Aorta (tissue), 5 donors: ENCODE measurements at regions of chr1 and their contacts with region 1.

Region 1: DNA sequence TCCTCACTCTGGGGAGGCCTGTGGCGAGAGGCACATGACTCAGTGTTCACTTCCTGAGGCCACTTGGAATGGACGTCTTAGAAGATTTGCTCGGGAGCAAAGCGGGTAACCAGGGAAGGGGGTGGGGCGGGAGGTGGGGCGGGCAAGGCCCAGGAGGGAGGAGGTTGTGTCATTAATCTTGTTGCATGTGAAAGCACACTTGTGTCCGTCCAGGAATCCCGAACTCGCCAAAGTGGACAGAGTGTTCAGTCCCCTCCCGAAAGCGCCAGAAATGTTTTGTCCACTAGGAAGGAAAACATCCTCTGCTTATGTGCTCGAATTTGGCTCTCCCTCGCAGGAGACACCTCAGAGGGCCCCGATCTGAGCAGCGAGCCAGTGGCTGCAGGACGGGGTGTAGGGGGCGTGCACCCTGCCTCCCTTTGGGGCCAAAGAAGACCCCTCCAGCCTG is 84.2 kb downstream of the SPSB1 start:
- DNase-seq: peak; percentile 79 to 86
- ATAC-seq: peak; percentile 86
- H3K4me3 ChIP-seq: no peak overlapping the region
- H3K27ac ChIP-seq: peak overlapping the region; percentile 62 to 97
- H3K4me1 ChIP-seq: peaks cover 0 to 2% of the 10 kb centered on the region in 2 donors
- H3K27me3 ChIP-seq: no peaks in the 10 kb centered on the region

Region 2: DNA sequence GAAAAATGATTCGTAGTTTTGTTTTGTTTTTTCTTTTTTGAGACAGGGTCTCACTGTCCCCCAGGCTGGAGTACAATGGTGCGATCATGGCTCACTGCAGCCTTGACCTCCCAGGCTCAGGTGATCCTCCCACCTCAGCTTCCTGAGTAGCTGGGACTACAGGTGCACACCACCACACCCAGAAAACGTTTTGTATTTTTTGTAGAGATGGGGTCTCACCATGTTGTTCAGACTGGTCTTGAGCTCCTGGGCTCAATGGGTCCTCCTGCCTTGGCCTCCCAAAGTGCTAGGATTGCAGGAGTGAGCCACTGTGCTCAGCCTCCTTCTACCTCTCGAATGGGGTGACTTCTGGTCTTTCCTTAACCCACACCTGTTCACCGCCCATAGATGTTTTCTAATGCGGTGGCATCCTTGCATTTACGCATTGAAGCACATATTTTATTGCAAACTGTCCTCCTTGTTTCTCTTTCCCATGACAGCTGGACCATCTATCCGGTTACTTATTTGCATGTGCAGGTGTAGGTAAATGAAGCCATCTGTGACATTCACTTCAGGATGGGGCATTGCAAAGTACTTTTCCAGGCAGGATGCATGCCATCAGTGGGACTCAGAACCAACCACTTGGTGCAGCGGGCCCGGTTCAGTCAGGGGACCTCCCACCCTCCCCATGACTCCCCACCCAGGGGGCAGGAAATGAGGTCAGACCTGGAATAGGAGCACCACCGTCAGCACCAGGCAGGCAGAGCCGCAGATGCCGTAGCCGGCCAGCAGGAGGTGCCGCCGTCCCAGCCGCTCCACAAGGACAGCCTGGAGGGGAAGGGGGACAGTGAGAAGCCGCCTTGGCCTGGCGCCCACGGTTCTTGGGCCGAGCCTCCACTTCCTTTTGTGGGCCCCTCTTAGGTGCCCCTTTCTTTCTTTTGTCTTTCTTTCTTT is 367.2 kb before region 1 on chr1:
- intact Hi-C with region 1: no loop called
- DNase-seq: no peak
- ATAC-seq: no peak
- H3K4me3 ChIP-seq: no peak overlapping the region
- H3K27ac ChIP-seq: no peak overlapping the region
- H3K4me1 ChIP-seq: no peaks in the 10 kb centered on the region
- H3K27me3 ChIP-seq: no peaks in the 10 kb centered on the region

Region 3: DNA sequence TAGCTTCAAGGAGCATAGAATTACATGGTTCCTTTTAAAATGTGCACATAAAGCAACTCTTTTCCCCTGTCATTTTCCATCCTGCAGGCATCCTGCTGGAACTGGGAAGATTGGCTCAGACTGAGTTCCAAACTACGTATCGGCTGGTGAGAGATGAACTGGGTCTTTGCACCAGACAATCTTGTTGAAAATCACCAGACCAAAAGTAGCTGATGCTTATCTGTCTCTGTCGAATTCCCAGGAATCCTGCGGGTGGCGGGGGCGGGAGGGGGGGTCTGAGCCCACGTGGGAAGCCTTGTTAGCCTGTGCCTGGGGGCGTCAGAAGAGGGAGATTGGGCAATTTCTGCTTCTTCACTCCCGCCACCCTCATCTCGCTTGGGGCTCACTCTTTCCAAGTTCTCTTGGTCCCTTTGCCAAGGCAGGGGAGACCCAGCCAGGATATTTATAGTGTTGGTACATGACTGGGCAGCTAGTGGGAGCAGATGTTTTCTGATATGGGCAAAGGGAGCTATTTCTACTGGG is 72.3 kb after region 1 on chr1:
- intact Hi-C with region 1: loop called in 1 of 2 experiments (anchors 5 kb)
- DNase-seq: peak; percentile 78 to 85
- ATAC-seq: peak; percentile 74
- H3K4me3 ChIP-seq: no peak overlapping the region
- H3K27ac ChIP-seq: peak overlapping the region in 1 of 2 donors; percentile 81
- H3K4me1 ChIP-seq: peaks cover 2 to 5% of the 10 kb centered on the region in 2 donors
- H3K27me3 ChIP-seq: no peaks in the 10 kb centered on the region